Activated CD8-positive, alpha-beta T cell treated with anti-CD3 and anti-CD28 coated beads for 36 hours (primary cell): ENCODE measurements at regions of chr5 and their contacts with region 1.

Region 1: GRCh38 chr5:95664204-95664786 is 17.7 kb downstream of the RFESD start:
- DNase-seq: peak; percentile 52
- ATAC-seq: peak; percentile 61
- H3K4me3 Mint-ChIP-seq: no peak overlapping the region
- H3K27ac Mint-ChIP-seq: no peak overlapping the region
- H3K4me1 Mint-ChIP-seq: peaks cover 3% of the 10 kb centered on the region
- H3K27me3 Mint-ChIP-seq: no peaks in the 10 kb centered on the region
- CTCF ChIP-seq: peak; percentile 92

Region 2: DNA sequence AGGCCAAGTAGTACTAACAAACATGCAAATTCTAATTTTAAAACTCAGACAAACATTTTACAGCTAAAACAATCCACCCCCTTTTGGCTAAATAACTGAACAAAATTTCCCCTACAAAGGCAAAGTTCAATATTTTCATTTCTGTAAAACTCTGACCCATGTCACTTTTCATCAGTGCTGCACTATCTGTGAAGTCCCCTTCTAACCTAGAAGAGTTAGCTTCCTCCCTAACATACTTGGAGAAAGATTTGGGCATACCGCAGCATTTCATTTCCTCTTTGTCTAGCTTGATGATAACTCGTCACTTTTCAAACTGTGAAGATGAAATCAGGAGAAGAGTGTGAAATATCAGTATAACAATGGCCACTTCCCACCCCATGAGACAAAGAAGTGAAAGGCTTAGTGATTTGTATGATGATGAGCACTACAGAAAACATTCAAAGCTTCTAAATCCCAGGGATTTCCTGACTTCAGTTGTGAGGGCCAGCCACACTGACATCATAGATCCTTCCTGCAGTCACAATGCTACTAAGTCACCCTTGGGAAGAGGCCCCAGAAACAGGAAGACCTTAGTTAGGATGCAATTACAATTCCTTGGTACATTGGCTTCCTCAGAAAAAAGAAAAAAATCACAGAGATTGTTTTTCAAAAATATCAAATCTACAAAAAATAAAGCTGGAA is 273.3 kb before region 1 on chr5 and contains the start of gene FAM81B:
- CTCF ChIA-PET with region 1: no interaction called
- POLR2A ChIA-PET with region 1: no interaction called
- intact Hi-C with region 1: no loop called
- DNase-seq: no peak
- ATAC-seq: no peak
- H3K4me3 Mint-ChIP-seq: no peak within 1 kb of the TSS
- H3K27ac Mint-ChIP-seq: no peak within 1 kb of the TSS
- H3K4me1 Mint-ChIP-seq: no peaks in the 10 kb centered on the region
- H3K27me3 Mint-ChIP-seq: peaks cover 10% of the 10 kb centered on the region
- CTCF ChIP-seq: no peak
- total RNA-seq, gene FAM81B: not detected

Region 3: GRCh38 chr5:95773335-95774059 is 109.2 kb after region 1 on chr5:
- CTCF ChIA-PET with region 1: interaction called, 13 read pairs
- POLR2A ChIA-PET with region 1: no interaction called
- intact Hi-C with region 1: no loop called
- DNase-seq: no peak
- ATAC-seq: no peak
- H3K4me3 Mint-ChIP-seq: no peak overlapping the region
- H3K27ac Mint-ChIP-seq: no peak overlapping the region
- H3K4me1 Mint-ChIP-seq: no peaks in the 10 kb centered on the region
- H3K27me3 Mint-ChIP-seq: no peaks in the 10 kb centered on the region
- CTCF ChIP-seq: no peak

Region 4: DNA sequence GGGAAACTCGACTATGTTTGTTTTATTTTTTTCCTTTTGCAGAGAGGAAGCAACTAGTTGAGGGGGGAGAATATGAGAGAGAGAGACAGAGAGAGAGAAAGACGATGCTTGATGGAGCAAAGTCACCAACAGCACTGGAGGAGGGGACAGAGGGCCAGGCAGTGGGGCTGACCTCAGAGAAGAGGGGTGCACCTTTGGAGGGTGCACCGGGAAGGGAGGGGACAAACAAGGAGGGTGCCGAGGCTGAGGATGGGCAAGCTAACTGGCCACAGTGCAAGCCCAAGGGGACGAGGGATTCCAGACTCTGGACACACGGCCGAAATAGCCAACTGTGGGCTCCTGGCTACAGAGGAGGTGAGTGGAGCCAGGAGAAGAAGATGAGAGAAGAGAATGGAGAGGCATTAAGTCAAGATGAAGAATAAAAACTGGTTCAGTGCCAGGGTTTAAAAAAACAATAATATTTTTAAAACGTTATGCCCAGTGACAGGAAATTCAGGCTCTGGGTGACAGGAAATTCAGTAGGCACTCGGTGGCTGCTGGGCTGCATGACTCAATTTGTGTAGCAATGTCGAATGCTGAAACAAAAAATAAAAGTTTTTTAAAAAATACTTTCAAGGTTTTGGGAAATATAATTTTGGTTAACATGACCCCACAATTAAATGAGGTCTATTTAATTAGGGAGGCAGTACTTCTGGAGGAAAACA is 171.5 kb after region 1 on chr5:
- CTCF ChIA-PET with region 1: interaction called, 14 read pairs
- POLR2A ChIA-PET with region 1: no interaction called
- intact Hi-C with region 1: loop called (anchors 5 kb)
- DNase-seq: peak; percentile 41
- ATAC-seq: no peak
- H3K4me3 Mint-ChIP-seq: peak overlapping the region; percentile 74
- H3K27ac Mint-ChIP-seq: peak overlapping the region; percentile 93
- H3K4me1 Mint-ChIP-seq: peaks cover 40% of the 10 kb centered on the region
- H3K27me3 Mint-ChIP-seq: no peaks in the 10 kb centered on the region
- CTCF ChIP-seq: no peak

Region 5: DNA sequence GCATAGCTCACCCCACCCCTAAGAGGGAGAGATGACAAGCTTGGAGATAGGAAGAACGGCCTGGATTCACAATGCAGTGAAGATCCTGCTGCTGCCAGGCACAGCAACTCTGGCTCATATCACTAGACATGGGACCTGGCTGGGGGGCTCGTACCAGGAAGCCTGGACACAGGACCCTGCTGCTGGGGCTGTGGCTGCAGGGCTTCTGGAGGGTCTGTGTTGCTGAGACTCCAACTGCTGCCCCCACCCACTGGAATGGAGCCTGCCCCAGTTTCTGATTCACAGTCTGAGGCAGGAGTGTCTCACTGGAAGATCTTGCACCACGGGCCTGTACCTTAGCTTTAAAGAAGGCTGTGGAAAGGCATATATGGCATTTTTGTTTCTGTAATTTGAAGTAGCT is 189.2 kb after region 1 on chr5:
- CTCF ChIA-PET with region 1: interaction called, 13 read pairs
- POLR2A ChIA-PET with region 1: no interaction called
- intact Hi-C with region 1: no loop called
- DNase-seq: no peak
- ATAC-seq: no peak
- H3K4me3 Mint-ChIP-seq: no peak overlapping the region
- H3K27ac Mint-ChIP-seq: no peak overlapping the region
- H3K4me1 Mint-ChIP-seq: peaks cover 5% of the 10 kb centered on the region
- H3K27me3 Mint-ChIP-seq: no peaks in the 10 kb centered on the region
- CTCF ChIP-seq: no peak